B cell (primary cell): ENCODE measurements at regions of chr1 and their contacts with region 1.

Region 1: DNA sequence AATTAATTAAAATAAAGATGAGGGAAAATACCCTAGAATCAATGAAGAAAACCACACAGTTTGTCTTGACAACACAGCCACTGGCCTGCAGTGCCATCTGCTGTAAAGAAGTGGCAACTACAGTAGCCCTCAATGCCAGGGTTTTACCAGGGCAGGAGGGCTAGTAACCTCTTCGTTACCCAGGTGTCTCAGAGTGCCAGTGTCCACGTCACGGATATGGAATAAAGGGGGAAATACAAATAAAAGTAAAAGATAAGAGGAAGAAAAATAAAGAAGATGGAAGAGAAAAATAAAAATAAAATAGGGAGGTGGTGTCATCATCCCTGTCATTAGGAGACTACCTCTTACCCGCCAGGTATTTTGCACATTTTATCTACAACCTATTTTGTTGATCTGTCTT is 14.2 kb upstream of the SLC44A3 start:
- DNase-seq: peak; percentile 69
- ATAC-seq: peak; percentile 87
- H3K4me3 ChIP-seq: no peak overlapping the region
- H3K4me3 Mint-ChIP-seq: no peak overlapping the region
- H3K27ac ChIP-seq: no peak overlapping the region
- H3K27ac Mint-ChIP-seq: no peak overlapping the region
- H3K4me1 ChIP-seq: peaks cover 0 to 6% of the 10 kb centered on the region in 2 donors
- H3K4me1 Mint-ChIP-seq: peaks cover 6% of the 10 kb centered on the region
- H3K27me3 ChIP-seq: peaks cover 0 to 8% (median 2%) of the 10 kb centered on the region in 4 experiments
- H3K27me3 Mint-ChIP-seq: peaks cover 5% of the 10 kb centered on the region
- CTCF ChIP-seq: peak; percentile 100

Region 2: GRCh38 chr1:94039514-94039870 is 766.4 kb before region 1 on chr1:
- CTCF ChIA-PET with region 1: interaction called, 14 read pairs
- POLR2A ChIA-PET with region 1: no interaction called
- intact Hi-C with region 1: no loop called
- DNase-seq: peak; percentile 51
- ATAC-seq: no peak
- H3K4me3 ChIP-seq: no peak overlapping the region
- H3K4me3 Mint-ChIP-seq: no peak overlapping the region
- H3K27ac ChIP-seq: no peak overlapping the region
- H3K27ac Mint-ChIP-seq: no peak overlapping the region
- H3K4me1 ChIP-seq: no peaks in the 10 kb centered on the region
- H3K4me1 Mint-ChIP-seq: peaks cover 3% of the 10 kb centered on the region
- H3K27me3 ChIP-seq: peaks cover 0 to 18% (median 4%) of the 10 kb centered on the region in 4 experiments
- H3K27me3 Mint-ChIP-seq: peaks cover 46% of the 10 kb centered on the region
- CTCF ChIP-seq: peak; percentile 79

Region 3: GRCh38 chr1:94061513-94062443 is 744.1 kb before region 1 on chr1:
- CTCF ChIA-PET with region 1: interaction called, 13 read pairs
- POLR2A ChIA-PET with region 1: no interaction called
- intact Hi-C with region 1: loop called (anchors 1 kb)
- DNase-seq: peak; percentile 32
- ATAC-seq: no peak
- H3K4me3 ChIP-seq: no peak overlapping the region
- H3K4me3 Mint-ChIP-seq: no peak overlapping the region
- H3K27ac ChIP-seq: no peak overlapping the region
- H3K27ac Mint-ChIP-seq: no peak overlapping the region
- H3K4me1 ChIP-seq: no peaks in the 10 kb centered on the region
- H3K4me1 Mint-ChIP-seq: no peaks in the 10 kb centered on the region
- H3K27me3 ChIP-seq: peaks cover 0 to 2% (median 0%) of the 10 kb centered on the region in 4 experiments
- H3K27me3 Mint-ChIP-seq: peaks cover 34% of the 10 kb centered on the region
- CTCF ChIP-seq: peak; percentile 49

Region 4: GRCh38 chr1:94481473-94481933 is 324.4 kb before region 1 on chr1:
- CTCF ChIA-PET with region 1: interaction called, 182 read pairs
- POLR2A ChIA-PET with region 1: no interaction called
- intact Hi-C with region 1: loop called (anchors 1 kb)
- DNase-seq: peak; percentile 69
- ATAC-seq: peak; percentile 79
- H3K4me3 ChIP-seq: no peak overlapping the region
- H3K4me3 Mint-ChIP-seq: no peak overlapping the region
- H3K27ac ChIP-seq: no peak overlapping the region
- H3K27ac Mint-ChIP-seq: no peak overlapping the region
- H3K4me1 ChIP-seq: no peaks in the 10 kb centered on the region
- H3K4me1 Mint-ChIP-seq: no peaks in the 10 kb centered on the region
- H3K27me3 ChIP-seq: no peaks in the 10 kb centered on the region
- H3K27me3 Mint-ChIP-seq: no peaks in the 10 kb centered on the region
- CTCF ChIP-seq: peak; percentile 90

Region 5: DNA sequence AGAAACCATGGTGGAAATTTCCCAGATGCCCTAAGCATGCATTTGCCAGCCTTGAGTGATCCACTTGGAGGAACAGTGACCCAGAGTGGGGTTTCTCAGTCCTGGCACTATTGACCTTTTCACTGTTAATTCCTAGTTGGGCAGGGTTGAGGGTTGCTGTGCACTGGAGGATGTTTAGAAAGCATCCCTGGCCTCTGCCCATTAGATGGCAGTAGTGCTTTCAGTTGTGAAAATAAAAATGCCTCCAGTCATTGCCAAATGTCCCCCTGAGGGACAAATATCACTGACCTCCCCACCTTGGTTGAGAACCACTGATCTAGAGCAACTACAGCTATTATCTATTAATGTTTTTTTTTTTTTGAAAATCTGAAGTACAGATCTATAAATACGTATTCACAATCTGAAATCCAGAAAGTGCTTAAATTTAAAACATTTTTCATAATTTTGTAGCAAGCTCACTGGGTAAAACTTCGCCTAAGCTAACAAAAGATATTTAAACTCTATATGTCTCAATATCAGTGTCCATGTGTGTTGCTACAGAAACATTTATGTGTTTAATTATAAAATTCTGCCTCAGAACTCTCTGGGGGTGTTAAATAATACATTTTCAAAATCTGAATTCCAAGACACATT is 291.7 kb before region 1 on chr1:
- CTCF ChIA-PET with region 1: interaction called, 64 read pairs
- POLR2A ChIA-PET with region 1: no interaction called
- intact Hi-C with region 1: loop called (anchors 1 kb)
- DNase-seq: peak; percentile 13
- ATAC-seq: no peak
- H3K4me3 ChIP-seq: no peak overlapping the region
- H3K4me3 Mint-ChIP-seq: no peak overlapping the region
- H3K27ac ChIP-seq: no peak overlapping the region
- H3K27ac Mint-ChIP-seq: no peak overlapping the region
- H3K4me1 ChIP-seq: no peaks in the 10 kb centered on the region
- H3K4me1 Mint-ChIP-seq: no peaks in the 10 kb centered on the region
- H3K27me3 ChIP-seq: no peaks in the 10 kb centered on the region
- H3K27me3 Mint-ChIP-seq: no peaks in the 10 kb centered on the region
- CTCF ChIP-seq: peak; percentile 54

Region 6: GRCh38 chr1:94792473-94793295 is 13.2 kb before region 1 on chr1:
- CTCF ChIA-PET with region 1: interaction called, 13 read pairs
- POLR2A ChIA-PET with region 1: no interaction called
- intact Hi-C with region 1: no loop called
- DNase-seq: peak; percentile 69
- ATAC-seq: peak; percentile 83
- H3K4me3 ChIP-seq: peak overlapping the region in 1 of 5 experiments; percentile 11
- H3K4me3 Mint-ChIP-seq: peak overlapping the region; percentile 50
- H3K27ac ChIP-seq: no peak overlapping the region
- H3K27ac Mint-ChIP-seq: peak overlapping the region; percentile 33
- H3K4me1 ChIP-seq: peaks cover 37 to 43% of the 10 kb centered on the region in 2 donors
- H3K4me1 Mint-ChIP-seq: peaks cover 48% of the 10 kb centered on the region
- H3K27me3 ChIP-seq: no peaks in the 10 kb centered on the region
- H3K27me3 Mint-ChIP-seq: no peaks in the 10 kb centered on the region
- CTCF ChIP-seq: peak; percentile 53